HCT116 (cell line): ENCODE measurements at regions of chrX and their contacts with region 1.

Region 1: GRCh38 chrX:139559383-139560042 is 29.0 kb downstream of the F9 start:
- DNase-seq: peak; percentile 24
- ATAC-seq: peak; percentile 63; the same call in 1 of the 2 replicates
- H3K4me3 ChIP-seq: no peak overlapping the region
- H3K27ac ChIP-seq: no peak overlapping the region
- H3K4me1 ChIP-seq: no peaks in the 10 kb centered on the region
- H3K27me3 ChIP-seq: no peaks in the 10 kb centered on the region
- CTCF ChIP-seq: peak in 2 of 3 experiments; percentile 36 to 45; a peak in 4 of 6 replicates
- POLR2A ChIP-seq: no peak
- RAD21 ChIP-seq: peak; percentile 40

Region 2: GRCh38 chrX:138128027-138128671 is 1431.4 kb before region 1 on chrX:
- CTCF ChIA-PET with region 1: no interaction called
- POLR2A ChIA-PET with region 1: no interaction called
- RAD21 ChIA-PET with region 1: no interaction called
- intact Hi-C with region 1: loop called (anchors 5 kb)
- DNase-seq: peak; percentile 1
- ATAC-seq: no peak
- H3K4me3 ChIP-seq: no peak overlapping the region
- H3K27ac ChIP-seq: no peak overlapping the region
- H3K4me1 ChIP-seq: no peaks in the 10 kb centered on the region
- H3K27me3 ChIP-seq: no peaks in the 10 kb centered on the region
- CTCF ChIP-seq: peak in 2 of 3 experiments; percentile 21 to 47; a peak in 2 of 6 replicates
- POLR2A ChIP-seq: no peak
- RAD21 ChIP-seq: no peak; the same call in 1 of the 2 replicates

Region 3: DNA sequence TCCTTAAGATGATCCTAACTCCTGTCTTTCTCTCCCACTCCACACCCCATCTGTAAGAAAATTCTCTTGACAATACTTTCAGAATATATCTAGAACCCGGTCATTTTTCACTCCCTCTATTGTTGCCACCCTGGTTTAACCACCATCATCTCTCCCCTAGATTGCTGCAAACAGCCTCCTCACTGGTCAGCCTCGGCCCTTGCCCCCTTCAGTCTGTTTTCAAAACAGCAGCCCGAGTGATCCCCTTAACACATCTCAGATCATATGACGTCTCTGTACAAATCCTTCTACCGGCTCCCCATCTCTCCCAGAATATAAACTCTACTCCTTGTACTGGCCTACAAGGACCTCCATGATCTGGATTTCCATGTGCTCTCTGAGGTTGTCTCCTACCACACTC is 64.2 kb before region 1 on chrX:
- CTCF ChIA-PET with region 1: no interaction called
- POLR2A ChIA-PET with region 1: no interaction called
- RAD21 ChIA-PET with region 1: no interaction called
- intact Hi-C with region 1: no loop called
- DNase-seq: no peak
- ATAC-seq: no peak
- H3K4me3 ChIP-seq: no peak overlapping the region
- H3K27ac ChIP-seq: no peak overlapping the region
- H3K4me1 ChIP-seq: no peaks in the 10 kb centered on the region
- H3K27me3 ChIP-seq: no peaks in the 10 kb centered on the region
- CTCF ChIP-seq: no peak
- POLR2A ChIP-seq: no peak
- RAD21 ChIP-seq: no peak

Region 4: DNA sequence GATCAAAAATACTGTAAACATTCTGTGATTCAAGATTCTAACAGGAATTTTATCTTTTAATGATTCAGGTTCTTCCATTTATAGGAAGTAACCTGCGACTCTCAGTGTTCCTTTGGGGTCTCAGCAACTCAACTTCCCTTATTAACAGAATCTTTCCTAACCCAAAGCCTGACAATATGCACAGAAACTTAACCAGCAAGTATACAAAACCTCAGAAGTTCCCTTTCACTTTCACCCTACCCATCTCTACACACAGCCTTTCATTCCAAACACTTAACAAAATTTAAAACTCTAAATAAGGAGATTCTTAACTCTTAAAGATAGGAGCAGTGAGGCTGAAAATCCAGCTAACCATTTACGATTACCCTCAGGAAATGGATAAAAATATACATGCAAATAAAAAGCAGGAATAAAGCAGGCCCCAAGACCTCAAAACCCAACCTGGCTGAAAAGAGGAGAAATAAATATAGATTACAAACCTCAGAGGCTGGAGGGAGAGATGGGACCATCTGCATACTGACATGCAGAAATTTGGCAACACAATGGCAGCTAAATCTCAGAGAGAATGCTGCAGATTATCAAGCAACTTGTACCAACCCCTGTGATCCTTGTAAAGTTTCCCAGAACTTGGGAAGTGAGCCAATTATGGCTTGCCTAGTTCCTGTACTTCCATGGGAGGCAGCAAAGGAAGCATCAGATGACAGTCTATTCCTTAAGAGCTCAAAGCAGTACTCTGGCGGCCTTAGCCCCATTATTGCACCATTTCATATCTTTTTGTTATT is 272.4 kb after region 1 on chrX:
- CTCF ChIA-PET with region 1: no interaction called
- POLR2A ChIA-PET with region 1: no interaction called
- RAD21 ChIA-PET with region 1: no interaction called
- intact Hi-C with region 1: no loop called
- DNase-seq: no peak
- ATAC-seq: no peak
- H3K4me3 ChIP-seq: no peak overlapping the region
- H3K27ac ChIP-seq: no peak overlapping the region
- H3K4me1 ChIP-seq: 0 out of 4 replicates have a peak, but pooled peaks cover 0 to 4% of the 10 kb centered on the region in 2 experiments
- H3K27me3 ChIP-seq: no peaks in the 10 kb centered on the region
- CTCF ChIP-seq: no peak
- POLR2A ChIP-seq: no peak
- RAD21 ChIP-seq: no peak